Psoas muscle (tissue), 8 donors: ENCODE measurements at regions of chr2 and their contacts with region 1.

Region 1: DNA sequence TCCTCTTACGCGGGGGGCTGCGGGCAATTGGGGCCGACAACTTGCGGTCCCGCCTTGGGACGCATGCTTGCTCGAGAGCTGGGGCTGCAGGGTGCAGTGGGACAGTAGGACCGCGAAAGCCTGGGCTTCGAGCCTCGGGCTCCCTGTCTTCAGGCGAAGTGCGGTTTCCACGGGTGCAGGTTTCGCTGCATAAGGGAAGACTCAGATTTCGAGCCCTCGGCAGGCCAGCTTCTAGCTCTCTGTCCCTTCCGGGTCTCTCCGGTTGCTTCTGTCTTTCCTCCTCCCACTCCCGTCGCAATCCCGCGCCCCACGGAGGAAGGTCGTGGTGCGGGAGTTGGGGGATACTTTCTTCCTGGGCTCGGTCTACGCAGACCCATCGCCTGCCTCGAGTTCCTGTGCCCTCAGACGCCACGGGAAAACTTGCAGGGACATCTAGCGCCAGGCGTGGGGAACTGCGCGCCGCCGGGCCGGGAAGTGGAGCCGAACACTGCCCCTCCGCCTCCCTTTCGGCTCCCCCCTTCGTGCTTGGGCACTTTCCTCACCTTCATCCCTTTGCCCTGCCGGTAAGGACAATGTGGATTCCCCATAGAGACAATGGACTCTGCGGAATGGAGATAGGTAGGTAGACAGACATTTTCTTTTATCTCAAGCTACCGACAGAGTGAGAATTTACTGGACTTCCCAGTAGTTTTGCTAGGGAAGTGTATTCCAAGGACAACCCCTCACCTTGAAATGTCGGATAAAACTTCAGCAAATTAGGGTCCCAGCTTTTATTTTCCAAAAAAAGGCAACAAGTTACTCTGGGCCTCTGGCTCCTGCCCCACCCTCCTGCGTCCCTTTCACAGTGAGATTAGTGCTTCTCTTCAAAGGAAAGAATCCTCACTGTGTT is 4.2 kb upstream of the HOXD13 start:
- DNase-seq: peak; percentile 57 to 79
- ATAC-seq: peak; percentile 83 to 88 (median 84)
- H3K4me3 ChIP-seq: peak overlapping the region; percentile 43
- H3K27ac ChIP-seq: no peak overlapping the region
- H3K4me1 ChIP-seq: peaks cover 12% of the 10 kb centered on the region
- H3K27me3 ChIP-seq: peaks cover 5 to 100% (median 64%) of the 10 kb centered on the region in 3 donors
- CTCF ChIP-seq: peak; percentile 79

Region 2: GRCh38 chr2:175366815-175367214 is 721.5 kb before region 1 on chr2:
- intact Hi-C with region 1: loop called (anchors 5 kb)
- DNase-seq: no peak
- ATAC-seq: peak in 3 of 4 donors; percentile 42 to 62 (median 61)
- H3K4me3 ChIP-seq: no peak overlapping the region
- H3K27ac ChIP-seq: no peak overlapping the region
- H3K4me1 ChIP-seq: no peaks in the 10 kb centered on the region
- H3K27me3 ChIP-seq: peaks cover 0 to 8% (median 8%) of the 10 kb centered on the region in 3 donors
- CTCF ChIP-seq: peak; percentile 72

Region 3: DNA sequence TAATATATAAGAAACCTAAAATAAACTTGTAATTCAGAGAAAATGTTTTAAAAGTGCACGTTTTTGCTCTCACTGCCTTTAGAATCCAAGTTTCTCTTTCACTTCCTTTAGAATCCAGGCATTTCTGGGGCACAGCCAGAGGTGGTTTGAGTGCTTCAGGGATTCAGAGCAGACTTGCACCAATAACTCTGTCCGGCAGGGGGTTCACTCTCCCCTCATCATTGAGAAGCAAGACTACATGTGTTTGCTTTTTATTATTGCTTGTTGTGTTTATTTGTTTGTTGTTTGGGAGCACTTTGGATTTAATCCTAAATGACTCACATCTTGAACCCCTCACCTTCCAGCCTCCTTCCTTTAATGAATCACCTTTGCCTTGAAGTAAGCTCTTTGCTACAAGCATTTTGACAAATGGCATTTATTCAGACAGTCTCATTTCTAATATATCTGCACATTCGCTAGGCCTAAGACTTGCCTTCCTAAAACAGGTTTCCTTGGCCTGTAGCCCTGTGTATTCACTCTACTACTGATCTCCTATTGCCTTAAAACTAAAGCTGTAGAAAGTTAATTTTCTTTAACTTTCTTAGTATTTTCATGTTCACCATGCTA is 673.3 kb before region 1 on chr2:
- intact Hi-C with region 1: loop called in 1 of 2 experiments (anchors 5 kb)
- DNase-seq: peak; percentile 22 to 53
- ATAC-seq: no peak
- H3K4me3 ChIP-seq: no peak overlapping the region
- H3K27ac ChIP-seq: no peak overlapping the region
- H3K4me1 ChIP-seq: no peaks in the 10 kb centered on the region
- H3K27me3 ChIP-seq: peaks cover 0 to 3% (median 0%) of the 10 kb centered on the region in 3 donors
- CTCF ChIP-seq: peak; percentile 56

Region 4: GRCh38 chr2:175690113-175690837 is 398.0 kb before region 1 on chr2:
- intact Hi-C with region 1: loop called (anchors 2 kb)
- DNase-seq: no peak
- ATAC-seq: peak; percentile 57 to 93 (median 74)
- H3K4me3 ChIP-seq: no peak overlapping the region
- H3K27ac ChIP-seq: no peak overlapping the region
- H3K4me1 ChIP-seq: no peaks in the 10 kb centered on the region
- H3K27me3 ChIP-seq: no peaks in the 10 kb centered on the region
- CTCF ChIP-seq: peak; percentile 88

Region 5: GRCh38 chr2:175823002-175823706 is 265.1 kb before region 1 on chr2:
- intact Hi-C with region 1: no loop called
- DNase-seq: no peak
- ATAC-seq: peak; percentile 67 to 88 (median 78)
- H3K4me3 ChIP-seq: no peak overlapping the region
- H3K27ac ChIP-seq: peak overlapping the region; percentile 34
- H3K4me1 ChIP-seq: peaks cover 10% of the 10 kb centered on the region
- H3K27me3 ChIP-seq: no peaks in the 10 kb centered on the region
- CTCF ChIP-seq: no peak

Region 6: GRCh38 chr2:175855794-175856453 is 232.4 kb before region 1 on chr2:
- intact Hi-C with region 1: loop called in 1 of 2 experiments (anchors 10 kb)
- DNase-seq: peak; percentile 62 to 84
- ATAC-seq: peak; percentile 97 to 98 (median 98)
- H3K4me3 ChIP-seq: peak overlapping the region; percentile 21
- H3K27ac ChIP-seq: peak overlapping the region; percentile 88
- H3K4me1 ChIP-seq: peaks cover 29% of the 10 kb centered on the region
- H3K27me3 ChIP-seq: no peaks in the 10 kb centered on the region
- CTCF ChIP-seq: no peak

Region 7: DNA sequence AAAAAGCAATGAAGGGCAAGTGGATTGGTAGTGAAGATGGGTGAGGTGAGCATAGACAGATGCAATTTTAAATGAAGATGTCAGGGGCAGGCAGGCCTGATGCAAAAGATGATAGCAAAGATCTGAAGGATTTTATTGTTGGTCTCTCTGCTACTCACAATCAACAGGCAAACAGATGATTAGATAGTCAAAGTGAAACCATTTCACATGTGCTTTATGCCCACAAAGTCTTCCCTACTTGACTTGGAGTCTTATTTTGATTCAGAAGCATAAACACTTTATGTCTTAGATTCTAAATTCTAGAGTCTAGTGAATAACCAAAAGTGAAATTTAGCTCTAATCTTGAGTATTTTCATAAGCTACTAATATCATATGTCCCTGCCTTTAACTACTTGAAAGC is 970.5 kb after region 1 on chr2:
- intact Hi-C with region 1: no loop called
- DNase-seq: no peak
- ATAC-seq: no peak
- H3K4me3 ChIP-seq: no peak overlapping the region
- H3K27ac ChIP-seq: no peak overlapping the region
- H3K4me1 ChIP-seq: no peaks in the 10 kb centered on the region
- H3K27me3 ChIP-seq: no peaks in the 10 kb centered on the region
- CTCF ChIP-seq: no peak